ENCODE measurements at regions of chr1 and their contacts with region 1.

Region 1: GRCh38 chr1:106072909-106073600 is 983.4 kb upstream of the PRMT6 start:
- DNase-seq: no peak

Region 2: DNA sequence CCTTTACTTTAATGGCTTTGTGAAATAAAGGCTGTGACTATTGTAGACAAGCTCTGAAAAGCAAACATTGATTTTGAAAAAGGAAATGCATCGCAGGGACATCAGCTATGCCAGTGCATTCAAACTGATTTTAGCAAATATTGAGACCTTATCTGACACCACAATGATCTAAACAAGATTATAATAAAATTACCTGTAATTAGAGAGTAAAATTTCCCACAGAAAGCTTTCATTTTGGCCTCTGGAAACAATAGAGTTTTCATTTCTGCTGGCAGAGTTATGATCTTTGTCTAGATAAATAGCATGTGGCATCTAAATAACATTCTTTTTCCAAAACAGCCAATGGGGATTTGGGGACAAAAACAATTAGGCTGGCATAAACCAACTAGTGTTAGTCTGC is 333.1 kb after region 1 on chr1:
- intact Hi-C with region 1: no loop called
- DNase-seq: no peak

Region 3: DNA sequence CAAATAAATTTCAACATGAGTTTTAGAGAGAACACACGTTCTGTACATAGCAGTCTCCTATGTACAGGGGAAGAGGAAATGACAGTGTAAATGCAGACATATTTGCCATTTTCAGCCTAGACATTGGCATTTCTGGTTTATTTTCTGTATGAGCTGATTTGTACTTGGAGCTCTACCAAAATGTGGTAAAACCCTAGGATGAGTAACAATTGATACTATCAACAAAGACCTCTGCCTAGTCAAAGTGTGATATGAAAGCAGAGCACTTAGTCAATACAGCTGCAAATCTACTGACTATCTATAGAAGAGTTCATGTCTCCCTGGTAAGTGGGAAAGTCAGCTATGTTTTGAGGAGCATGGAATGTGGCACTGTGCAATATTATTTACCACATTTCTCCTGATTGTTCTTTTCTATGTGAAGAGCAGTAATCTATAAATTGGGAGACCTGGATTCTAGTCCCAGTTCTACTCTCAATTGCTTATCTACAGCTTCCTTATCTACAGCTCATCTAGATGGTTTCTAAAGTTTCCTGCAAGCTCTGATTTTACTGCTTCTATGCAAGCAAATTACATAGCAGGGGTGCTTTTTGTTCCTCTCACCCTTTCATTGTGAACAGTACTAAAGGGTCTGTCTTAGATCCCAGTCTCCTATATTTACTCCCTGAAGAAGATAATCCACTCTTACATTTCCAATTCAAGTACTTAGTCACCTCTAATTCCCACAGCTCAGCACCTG is 1402.0 kb after region 1 on chr1:
- intact Hi-C with region 1: loop called in 1 of 2 experiments (anchors 5 kb)
- DNase-seq: no peak

Measured in posterior vena cava (tissue), 2 donors.